Breast epithelium (tissue), 4 donors: ENCODE measurements at regions of chrX and their contacts with region 1.

Region 1: GRCh38 chrX:30181353-30181752 is 34.0 kb upstream of the MAGEB2 start:
- DNase-seq: no peak
- H3K4me3 ChIP-seq: no peak overlapping the region
- H3K27ac ChIP-seq: no peak overlapping the region
- H3K4me1 ChIP-seq: no peaks in the 10 kb centered on the region
- H3K27me3 ChIP-seq: peaks cover 0 to 28% of the 10 kb centered on the region in 2 donors
- CTCF ChIP-seq: no peak
- POLR2A ChIP-seq: no peak

Region 2: GRCh38 chrX:30150196-30150895 is 31.0 kb before region 1 on chrX:
- intact Hi-C with region 1: loop called (anchors 1 kb)
- DNase-seq: no peak
- H3K4me3 ChIP-seq: no peak overlapping the region
- H3K27ac ChIP-seq: no peak overlapping the region
- H3K4me1 ChIP-seq: no peaks in the 10 kb centered on the region
- H3K27me3 ChIP-seq: peaks cover 0 to 11% of the 10 kb centered on the region in 2 donors
- CTCF ChIP-seq: no peak
- POLR2A ChIP-seq: no peak